Brain microvascular endothelial cell (primary cell): ENCODE measurements at regions of chr1 and their contacts with region 1.

Region 1: DNA sequence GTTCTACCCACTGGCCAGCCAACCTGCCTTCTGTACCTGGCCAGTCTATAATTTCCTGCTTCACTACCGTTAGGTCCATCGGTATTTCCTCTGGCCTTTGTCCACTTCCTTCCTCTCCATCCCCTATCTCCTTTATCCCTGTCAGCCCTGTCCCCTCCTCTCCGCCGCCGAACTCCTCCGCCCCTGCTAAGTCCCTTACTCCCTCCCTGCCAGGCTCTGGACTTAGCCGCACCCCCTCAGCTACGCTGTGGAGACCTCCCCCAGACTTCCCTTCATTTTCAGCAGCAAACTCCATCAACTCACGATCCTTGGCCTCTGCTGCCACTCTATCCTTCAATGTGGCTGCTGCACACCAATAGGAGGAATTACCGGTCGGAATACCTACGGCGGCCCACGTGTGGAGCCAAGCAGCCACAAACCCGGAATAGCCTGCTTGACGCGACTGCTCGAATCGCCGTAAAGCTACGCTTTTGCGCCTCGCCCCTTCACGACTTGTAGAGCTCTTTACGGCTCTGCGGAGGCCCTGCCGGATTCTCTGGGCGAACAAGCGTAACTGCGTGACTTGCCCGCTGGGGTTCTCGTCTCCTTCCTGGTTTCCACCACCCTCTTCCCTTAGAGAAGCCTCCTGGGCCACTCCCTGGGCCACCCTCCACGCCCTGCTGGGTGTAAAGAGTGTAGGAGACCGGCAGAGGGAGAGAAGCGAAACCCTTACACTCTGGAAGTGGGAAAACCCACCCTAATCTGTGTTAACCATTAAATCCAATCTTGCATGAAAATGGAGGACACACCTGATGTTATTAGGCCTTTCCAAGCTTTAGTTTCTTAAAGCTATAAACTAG is at the start of gene ZNHIT6:
- DNase-seq: peak; percentile 96
- H3K4me3 ChIP-seq: peak within 1 kb of the TSS; percentile 88
- H3K27ac ChIP-seq: peak within 1 kb of the TSS; percentile 65
- H3K27me3 ChIP-seq: no peaks in the 10 kb centered on the region
- CTCF ChIP-seq: peak; percentile 57

Region 2: GRCh38 chr1:85894651-85895050 is 186.4 kb after region 1 on chr1:
- in situ Hi-C with region 1: loop called (anchors 25 kb)
- DNase-seq: peak; percentile 60
- H3K4me3 ChIP-seq: no peak overlapping the region
- H3K27ac ChIP-seq: no peak overlapping the region
- H3K27me3 ChIP-seq: no peaks in the 10 kb centered on the region
- CTCF ChIP-seq: peak; percentile 70